Left colon (tissue), 2 donors: ENCODE measurements at regions of chr19 and their contacts with region 1.

Region 1: DNA sequence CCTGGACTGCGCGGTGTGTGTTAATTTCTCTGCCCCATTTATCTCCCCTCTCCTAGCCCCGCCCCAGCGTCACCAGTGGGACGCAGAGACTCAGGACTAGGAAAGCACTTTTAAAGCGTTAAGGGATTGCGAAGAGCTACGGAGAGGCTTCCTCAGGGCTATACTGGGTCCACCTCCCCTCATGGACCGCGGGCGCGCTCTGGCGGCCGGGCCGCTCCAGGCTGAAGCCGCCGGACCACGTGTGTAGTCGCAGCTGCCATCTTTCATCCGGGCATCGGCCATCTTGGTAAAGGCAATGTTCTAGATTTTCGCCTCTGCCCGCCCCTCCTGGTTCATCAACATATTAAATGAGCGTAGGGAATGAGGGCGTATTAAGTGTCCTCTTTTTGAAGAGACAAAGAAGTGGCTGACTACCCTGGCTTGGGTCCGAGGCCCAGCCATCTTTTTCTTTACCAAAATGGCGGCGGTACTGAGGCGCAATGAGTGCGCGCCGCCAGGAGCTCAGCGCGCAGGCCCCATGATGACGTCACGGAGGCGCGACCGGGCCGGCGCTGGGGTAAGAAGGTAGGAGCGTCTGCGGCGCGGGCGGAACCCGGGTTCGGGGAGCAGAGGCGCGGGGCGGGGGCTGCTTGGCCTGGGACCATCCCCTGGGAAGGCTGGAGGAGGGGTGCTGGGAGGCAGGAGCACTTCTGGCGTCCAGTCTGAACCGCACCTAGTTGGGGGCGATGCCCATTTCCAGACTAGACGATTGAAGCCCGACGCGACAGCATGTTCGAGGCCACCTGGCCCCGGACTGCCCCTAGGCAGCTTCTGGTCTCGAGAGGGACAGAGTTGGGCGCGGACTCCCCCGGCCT is at the start of gene CCDC124:
- DNase-seq: peak; percentile 89 to 95
- ATAC-seq: peak; percentile 98
- total RNA-seq, gene CCDC124: 39.5 to 51.5 TPM

Region 2: GRCh38 chr19:17859533-17860330 is 73.0 kb before region 1 on chr19 and contains the start of gene RPL18A:
- intact Hi-C with region 1: loop called in 1 of 2 experiments (anchors 10 kb)
- DNase-seq: peak; percentile 98 to 99
- ATAC-seq: peak; percentile 89
- total RNA-seq, gene RPL18A: 1,406 to 1,485 TPM

Region 3: GRCh38 chr19:17865364-17866311 is 67.1 kb before region 1 on chr19:
- intact Hi-C with region 1: loop called (anchors 5 to 10 kb)
- DNase-seq: peak; percentile 82 to 88
- ATAC-seq: peak; percentile 90